ENCODE measurements at regions of chr16 and their contacts with region 1.

Region 1: DNA sequence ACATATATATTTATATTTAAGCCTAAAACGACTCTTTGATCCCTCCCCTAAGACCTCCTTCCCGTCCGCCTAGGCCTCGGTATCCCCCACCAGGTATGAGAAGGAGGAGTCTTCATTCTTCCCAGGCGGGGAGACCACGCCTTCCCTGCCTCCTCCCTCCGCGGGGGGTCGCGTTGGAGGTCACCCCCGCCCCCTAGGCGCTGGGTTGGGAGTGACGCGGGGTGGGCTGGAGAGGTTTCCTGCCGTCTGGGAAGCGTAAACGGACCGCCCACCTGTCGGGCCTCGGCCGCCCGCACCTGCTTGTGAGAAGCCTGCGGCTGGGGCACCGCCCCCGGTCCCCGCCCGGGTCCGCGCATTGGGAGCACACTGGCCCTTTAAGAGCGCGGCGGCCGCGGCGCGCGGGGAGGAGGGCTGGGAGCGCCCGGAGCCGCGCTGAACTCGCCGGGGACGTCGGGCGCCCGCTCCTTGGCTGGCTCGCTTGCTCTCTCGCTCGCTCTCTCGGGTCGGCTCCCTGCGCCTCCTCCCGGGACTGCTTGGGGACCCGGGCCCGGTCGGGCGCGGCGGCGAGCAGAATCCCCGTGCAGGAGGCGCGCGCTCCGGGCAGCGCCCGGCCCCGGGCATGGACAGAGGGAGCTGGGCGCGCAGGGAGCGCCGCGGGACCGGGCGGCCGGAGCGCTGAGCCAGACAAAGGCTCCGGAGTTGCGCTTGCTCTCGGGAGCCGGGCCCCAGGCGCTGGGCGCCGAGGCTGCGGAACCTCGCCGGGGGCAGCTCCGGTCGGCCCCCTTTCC is at the start of gene MMP15:
- DNase-seq: peak; percentile 51
- H3K4me3 ChIP-seq: peak within 1 kb of the TSS; percentile 66
- H3K27ac ChIP-seq: no peak within 1 kb of the TSS
- H3K4me1 ChIP-seq: peaks cover 3% of the 10 kb centered on the region
- CTCF ChIP-seq: no peak
- total RNA-seq, gene MMP15: not detected in 2 replicates

Region 2: DNA sequence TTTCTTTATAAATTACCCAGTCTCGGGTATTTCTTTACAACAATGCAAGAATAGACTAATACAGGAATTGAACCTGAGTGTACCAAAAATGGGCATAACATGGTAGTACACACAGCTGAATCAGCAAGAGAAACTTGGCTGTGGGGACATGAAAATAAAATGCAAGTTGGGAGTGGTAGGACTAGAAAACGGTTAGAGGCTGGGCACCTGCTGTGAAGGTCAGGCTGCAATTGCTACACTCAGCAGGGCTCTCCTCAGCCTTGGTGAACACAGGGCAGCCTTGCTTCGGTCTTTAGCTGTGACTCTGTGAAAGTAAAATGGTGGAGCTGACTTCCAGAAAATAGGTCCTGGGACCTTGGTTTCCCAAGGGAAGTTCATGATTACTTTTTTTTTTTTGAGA is 100.2 kb before region 1 on chr16:
- CTCF ChIA-PET with region 1: no interaction called
- POLR2A ChIA-PET with region 1: no interaction called
- intact Hi-C with region 1: no loop called
- DNase-seq: no peak
- H3K4me3 ChIP-seq: no peak overlapping the region
- H3K27ac ChIP-seq: no peak overlapping the region
- H3K4me1 ChIP-seq: no peaks in the 10 kb centered on the region
- CTCF ChIP-seq: no peak

Region 3: GRCh38 chr16:58110571-58111301 is 85.2 kb after region 1 on chr16:
- CTCF ChIA-PET with region 1: no interaction called
- POLR2A ChIA-PET with region 1: no interaction called
- intact Hi-C with region 1: no loop called
- DNase-seq: no peak
- H3K4me3 ChIP-seq: no peak overlapping the region
- H3K27ac ChIP-seq: no peak overlapping the region
- H3K4me1 ChIP-seq: peaks cover 5% of the 10 kb centered on the region
- CTCF ChIP-seq: no peak

Region 4: GRCh38 chr16:58198022-58198683 is 172.6 kb after region 1 on chr16 and contains the start of gene CSNK2A2:
- CTCF ChIA-PET with region 1: no interaction called
- POLR2A ChIA-PET with region 1: no interaction called
- intact Hi-C with region 1: loop called (anchors 5 kb)
- DNase-seq: peak; percentile 88
- H3K4me3 ChIP-seq: peak within 1 kb of the TSS; percentile 81
- H3K27ac ChIP-seq: no peak within 1 kb of the TSS
- H3K4me1 ChIP-seq: peaks cover 14% of the 10 kb centered on the region
- CTCF ChIP-seq: no peak
- total RNA-seq, gene CSNK2A2: 20.6 and 28.7 TPM in 2 replicates

Measured in OCI-LY7 (cell line).